Panc1 (cell line): ENCODE measurements at regions of chr11 and their contacts with region 1.

Region 1: GRCh38 chr11:100515087-100515486 is 172.0 kb upstream of the ARHGAP42 start:
- DNase-seq: no peak
- ATAC-seq: peak; percentile 82
- H3K4me3 ChIP-seq: no peak overlapping the region
- H3K27ac ChIP-seq: no peak overlapping the region
- H3K4me1 ChIP-seq: no peaks in the 10 kb centered on the region
- H3K27me3 ChIP-seq: no peaks in the 10 kb centered on the region
- CTCF ChIP-seq: no peak

Region 2: DNA sequence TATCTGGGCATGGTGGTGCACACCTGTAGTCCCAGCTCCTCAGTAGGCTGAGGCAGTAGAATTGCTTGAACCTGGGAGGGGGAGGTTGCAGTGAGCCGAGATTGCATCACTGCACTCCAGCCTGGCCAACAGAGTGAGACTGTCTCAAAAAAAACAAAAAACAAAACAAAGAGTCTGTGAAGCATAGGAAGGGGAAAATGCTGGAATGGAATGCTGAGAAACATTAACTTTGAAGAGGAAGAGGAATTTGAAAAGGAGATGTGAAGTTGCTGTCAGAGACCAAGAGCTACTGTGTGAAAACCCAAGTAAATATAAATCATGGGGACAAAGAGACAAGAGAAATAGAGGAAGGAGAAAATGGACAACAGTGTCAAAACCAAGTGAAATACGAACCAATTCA is 283.1 kb before region 1 on chr11:
- CTCF ChIA-PET with region 1: no interaction called
- POLR2A ChIA-PET with region 1: no interaction called
- in situ Hi-C with region 1: no loop called
- intact Hi-C with region 1: no loop called
- DNase-seq: no peak
- ATAC-seq: no peak
- H3K4me3 ChIP-seq: no peak overlapping the region
- H3K27ac ChIP-seq: no peak overlapping the region
- H3K4me1 ChIP-seq: no peaks in the 10 kb centered on the region
- H3K27me3 ChIP-seq: no peaks in the 10 kb centered on the region
- CTCF ChIP-seq: no peak

Region 3: GRCh38 chr11:100467821-100468508 is 47.1 kb before region 1 on chr11:
- CTCF ChIA-PET with region 1: no interaction called
- POLR2A ChIA-PET with region 1: no interaction called
- in situ Hi-C with region 1: no loop called
- intact Hi-C with region 1: loop called (anchors 5 kb)
- DNase-seq: no peak
- ATAC-seq: peak; percentile 53; the same call in 1 of the 2 replicates
- H3K4me3 ChIP-seq: peak overlapping the region in 1 of 2 experiments; percentile 7; a peak in 3 of 4 replicates
- H3K27ac ChIP-seq: no peak overlapping the region
- H3K4me1 ChIP-seq: no peaks in the 10 kb centered on the region
- H3K27me3 ChIP-seq: no peaks in the 10 kb centered on the region
- CTCF ChIP-seq: no peak